Mammary epithelial cell (primary cell): ENCODE measurements at regions of chr13 and their contacts with region 1.

Region 1: DNA sequence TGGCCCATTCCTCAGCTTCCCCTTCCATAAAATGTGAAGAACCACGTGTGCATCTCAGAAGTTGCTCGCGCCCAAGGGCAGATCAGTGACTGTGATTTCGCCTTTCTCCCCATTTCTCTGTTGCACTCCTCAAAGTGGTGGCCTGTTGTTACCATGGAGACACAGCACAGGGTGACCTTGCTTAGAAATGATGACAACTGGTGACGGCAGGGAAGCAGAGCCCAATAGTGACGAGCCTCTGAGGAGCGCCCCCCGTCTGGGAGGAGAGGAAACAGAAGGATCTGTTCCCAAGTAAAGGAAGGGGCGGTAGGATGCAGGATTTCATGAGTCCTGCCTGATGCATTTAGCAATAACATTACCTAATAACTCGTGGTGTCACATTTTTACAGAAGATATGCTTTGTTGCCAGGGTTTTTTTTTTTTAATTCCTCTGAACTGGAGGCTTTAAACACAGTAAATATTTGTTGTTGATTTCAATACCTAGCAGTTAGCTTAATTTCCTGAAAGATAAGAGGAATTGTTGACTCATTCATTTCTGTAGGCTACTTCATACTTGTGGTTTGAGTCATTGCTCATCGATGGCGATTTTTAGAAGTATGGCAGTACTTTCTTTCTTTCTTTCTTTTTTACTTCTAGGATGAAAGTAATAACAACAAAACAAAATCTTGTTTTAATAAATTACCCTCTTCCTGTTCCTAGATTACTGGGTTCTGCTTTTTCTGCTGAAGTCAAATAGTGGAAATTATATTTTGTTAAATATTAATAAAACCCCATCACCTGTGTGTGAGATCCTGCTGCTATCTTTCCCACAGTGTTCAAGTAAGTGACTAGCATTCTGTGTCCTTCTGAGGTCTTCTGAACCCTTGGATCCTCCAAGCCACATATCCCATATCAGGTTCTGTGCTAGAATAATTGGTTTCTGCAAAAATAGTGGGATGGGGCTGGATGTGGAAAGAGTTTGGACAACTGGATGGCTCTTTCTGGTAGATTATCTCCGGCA is 36.0 kb downstream of the MBNL2 start:
- DNase-seq: peak; percentile 79
- H3K4me3 ChIP-seq: no peak overlapping the region
- H3K27ac ChIP-seq: peak overlapping the region; percentile 97
- H3K4me1 ChIP-seq: peaks cover 66% of the 10 kb centered on the region
- H3K27me3 ChIP-seq: no peaks in the 10 kb centered on the region
- CTCF ChIP-seq: no peak

Region 2: GRCh38 chr13:97275265-97275664 is 17.2 kb after region 1 on chr13:
- CTCF ChIA-PET with region 1: no interaction called
- dilution Hi-C with region 1: no loop called
- in situ Hi-C with region 1: no loop called
- intact Hi-C with region 1: loop called (anchors 1 kb)
- DNase-seq: peak; percentile 79
- H3K4me3 ChIP-seq: peak overlapping the region in 1 of 3 experiments; percentile 13
- H3K27ac ChIP-seq: peak overlapping the region; percentile 97
- H3K4me1 ChIP-seq: peaks cover 74% of the 10 kb centered on the region
- H3K27me3 ChIP-seq: no peaks in the 10 kb centered on the region
- CTCF ChIP-seq: no peak

Region 3: DNA sequence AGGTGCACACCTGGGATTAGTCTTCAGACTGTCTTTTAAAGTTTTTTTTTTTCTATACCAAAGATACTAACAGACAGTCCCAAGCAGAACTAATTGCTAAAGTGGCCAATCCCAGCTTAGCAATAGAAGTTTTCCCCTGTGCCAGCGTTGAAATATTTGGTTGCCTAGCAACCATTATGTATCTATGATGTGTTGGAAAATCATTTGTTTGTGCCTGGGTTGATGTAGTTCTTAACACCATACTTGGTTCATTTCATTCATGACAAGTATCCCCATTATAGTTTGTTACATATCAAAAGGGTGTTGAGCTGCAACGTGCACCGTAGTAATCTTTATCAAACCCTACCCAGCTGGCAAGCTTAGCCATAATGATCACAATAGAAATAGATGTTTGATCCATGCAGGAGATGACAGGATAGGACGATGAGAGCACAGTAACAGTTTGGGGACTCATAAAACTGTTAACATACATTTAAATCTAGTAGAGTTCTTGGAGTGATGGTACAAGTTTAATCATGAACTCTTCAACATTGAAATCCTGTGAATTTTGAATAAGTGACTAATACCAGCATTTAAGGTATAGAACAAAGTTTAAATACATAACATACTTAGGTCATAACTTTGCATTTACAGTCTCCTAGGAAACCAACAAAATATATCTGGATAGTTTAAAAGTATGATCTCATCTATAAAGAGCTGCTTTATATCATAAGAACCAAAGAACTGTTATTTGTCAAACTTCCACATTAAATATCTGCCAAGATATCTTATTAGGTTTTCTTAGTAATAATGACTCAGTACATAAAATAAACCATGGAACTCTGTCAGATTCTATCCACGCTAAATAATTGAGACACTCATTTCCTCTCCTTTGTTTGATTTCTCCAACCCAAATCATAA is 37.4 kb after region 1 on chr13:
- CTCF ChIA-PET with region 1: no interaction called
- dilution Hi-C with region 1: no loop called
- in situ Hi-C with region 1: no loop called
- intact Hi-C with region 1: loop called (anchors 1 kb)
- DNase-seq: peak; percentile 88
- H3K4me3 ChIP-seq: peak overlapping the region in 1 of 3 experiments; percentile 14
- H3K27ac ChIP-seq: peak overlapping the region; percentile 99
- H3K4me1 ChIP-seq: peaks cover 45% of the 10 kb centered on the region
- H3K27me3 ChIP-seq: no peaks in the 10 kb centered on the region
- CTCF ChIP-seq: no peak

Region 4: GRCh38 chr13:97328222-97328790 is 70.2 kb after region 1 on chr13:
- CTCF ChIA-PET with region 1: no interaction called
- dilution Hi-C with region 1: no loop called
- in situ Hi-C with region 1: no loop called
- intact Hi-C with region 1: loop called (anchors 5 kb)
- DNase-seq: peak; percentile 23
- H3K4me3 ChIP-seq: no peak overlapping the region
- H3K27ac ChIP-seq: peak overlapping the region; percentile 43
- H3K4me1 ChIP-seq: peaks cover 22% of the 10 kb centered on the region
- H3K27me3 ChIP-seq: no peaks in the 10 kb centered on the region
- CTCF ChIP-seq: no peak